Right cardiac atrium (tissue), 5 donors: ENCODE measurements at regions of chr3 and their contacts with region 1.

Region 1: GRCh38 chr3:133927540-133928066 is 31.9 kb upstream of the RAB6B start:
- DNase-seq: peak; percentile 77 to 91 (median 86)
- ATAC-seq: peak; percentile 69 to 84
- H3K4me3 ChIP-seq: peak overlapping the region; percentile 52
- H3K27ac ChIP-seq: no peak overlapping the region
- H3K4me1 ChIP-seq: no peaks in the 10 kb centered on the region
- H3K27me3 ChIP-seq: no peaks in the 10 kb centered on the region

Region 2: DNA sequence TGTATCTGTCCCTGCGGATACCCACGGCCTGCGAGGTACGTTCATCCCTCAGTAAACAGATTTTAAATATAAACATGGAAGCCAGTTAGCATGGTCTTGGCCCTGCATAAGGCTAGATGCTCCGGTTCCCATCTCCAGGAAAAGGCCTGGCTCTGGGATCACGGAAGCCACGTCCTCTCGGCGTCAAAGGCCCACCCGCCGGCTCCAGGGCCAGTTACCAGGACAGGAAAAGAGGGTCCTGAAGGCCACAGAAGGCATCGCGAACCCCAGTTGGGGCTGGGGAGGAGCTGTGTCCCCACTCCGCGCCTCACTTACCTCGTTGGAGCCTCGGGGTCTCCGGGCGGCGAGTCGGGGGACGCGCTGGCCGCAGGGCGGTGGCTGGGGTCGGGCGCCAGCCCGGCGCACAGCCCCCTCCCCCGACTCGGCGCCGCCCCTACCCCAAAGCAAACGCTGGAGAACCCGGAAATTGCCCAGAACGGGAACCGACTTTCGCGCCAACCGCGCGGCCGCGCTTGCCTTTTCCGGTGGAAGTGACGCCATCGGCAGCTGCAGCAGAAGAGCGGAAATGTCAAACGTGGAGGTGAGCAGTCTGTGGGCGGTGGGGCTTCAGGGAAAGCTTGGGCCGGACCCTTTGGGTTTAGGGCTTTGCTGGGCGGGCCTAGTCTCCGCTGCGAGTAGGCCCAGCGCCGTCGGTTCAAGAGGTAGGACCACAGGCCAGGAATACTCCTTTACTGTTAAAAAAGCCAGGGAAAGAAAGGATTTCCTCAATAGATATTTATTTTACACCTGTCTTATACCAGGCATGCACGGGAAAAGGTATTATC is 265.9 kb before region 1 on chr3 and contains the start of gene TOPBP1:
- intact Hi-C with region 1: loop called in 2 of 4 experiments (anchors 5 to 10 kb)
- DNase-seq: peak; percentile 83 to 93 (median 92)
- ATAC-seq: peak; percentile 91 to 92
- H3K4me3 ChIP-seq: peak within 1 kb of the TSS; percentile 66
- H3K27ac ChIP-seq: peak within 1 kb of the TSS; percentile 93
- H3K4me1 ChIP-seq: peaks cover 3% of the 10 kb centered on the region
- H3K27me3 ChIP-seq: no peaks in the 10 kb centered on the region
- total RNA-seq, gene TOPBP1: 10.5 to 12.7 (median 12.4) TPM

Region 3: DNA sequence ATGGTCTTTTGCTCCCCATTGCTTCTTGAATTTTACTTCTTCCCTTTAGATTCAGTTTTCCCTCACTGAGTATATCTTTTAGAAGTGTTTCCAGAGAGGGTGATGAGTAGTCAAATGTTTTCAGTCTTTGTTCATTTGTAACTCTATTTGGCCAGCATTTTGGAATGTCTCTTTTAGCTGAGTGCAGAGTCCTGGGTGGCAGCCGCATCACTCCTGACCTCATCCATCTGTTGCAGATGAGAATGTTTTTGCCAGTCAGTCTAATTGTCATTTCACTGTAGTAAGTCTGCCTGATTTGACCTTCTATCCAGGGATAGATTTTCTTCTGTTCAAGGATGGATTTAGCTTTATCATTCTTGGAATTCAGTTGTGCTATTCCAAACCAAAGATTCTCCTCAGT is 114.7 kb before region 1 on chr3:
- intact Hi-C with region 1: loop called in 2 of 4 experiments (anchors 2 to 5 kb)
- DNase-seq: no peak
- ATAC-seq: peak in 1 of 2 donors; percentile 11
- H3K4me3 ChIP-seq: no peak overlapping the region
- H3K27ac ChIP-seq: no peak overlapping the region
- H3K4me1 ChIP-seq: no peaks in the 10 kb centered on the region
- H3K27me3 ChIP-seq: no peaks in the 10 kb centered on the region

Region 4: GRCh38 chr3:133821767-133822638 is 105.6 kb before region 1 on chr3:
- intact Hi-C with region 1: loop called (anchors 1 to 5 kb)
- DNase-seq: peak; percentile 72 to 89 (median 86)
- ATAC-seq: peak; percentile 49 to 87
- H3K4me3 ChIP-seq: no peak overlapping the region
- H3K27ac ChIP-seq: no peak overlapping the region
- H3K4me1 ChIP-seq: no peaks in the 10 kb centered on the region
- H3K27me3 ChIP-seq: no peaks in the 10 kb centered on the region

Region 5: DNA sequence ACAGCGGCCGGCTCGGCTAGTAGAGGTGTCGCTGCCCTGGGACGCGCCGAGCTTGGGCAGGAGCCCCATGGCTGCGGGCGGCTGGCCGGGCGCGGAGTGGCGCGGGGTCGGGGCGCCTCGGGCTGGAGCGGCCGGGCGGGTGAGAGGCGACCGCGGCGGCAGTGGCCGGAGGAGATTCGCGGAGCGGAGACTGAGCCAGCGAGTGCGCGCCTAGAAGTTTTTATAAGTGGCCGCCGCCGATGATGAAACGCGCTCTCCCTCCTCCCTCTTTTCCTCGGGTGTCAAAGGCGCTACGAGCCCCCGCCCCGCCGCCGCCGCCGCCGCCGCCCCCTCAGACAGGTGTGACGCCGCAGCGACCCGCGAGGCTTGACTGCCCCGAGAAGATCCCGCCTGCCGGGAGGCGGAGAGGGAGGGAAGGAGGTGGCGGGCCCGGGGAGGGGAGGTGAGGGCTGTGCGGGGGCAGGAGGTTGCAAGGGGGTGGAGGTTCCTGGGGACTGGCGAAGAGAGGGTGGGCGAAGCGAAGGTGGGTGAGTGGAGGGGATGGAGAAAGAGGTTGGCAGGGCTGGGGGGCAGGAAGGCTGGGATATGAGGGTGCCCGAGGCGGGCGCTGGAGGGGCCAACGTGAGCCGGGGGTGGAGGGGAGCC is 102.3 kb after region 1 on chr3 and contains the start of gene SLCO2A1:
- intact Hi-C with region 1: loop called in 1 of 4 experiments (anchors 10 kb)
- DNase-seq: peak; percentile 64 to 80 (median 79)
- ATAC-seq: peak; percentile 79 to 81
- H3K4me3 ChIP-seq: peak within 1 kb of the TSS; percentile 73
- H3K27ac ChIP-seq: no peak within 1 kb of the TSS
- H3K4me1 ChIP-seq: no peaks in the 10 kb centered on the region
- H3K27me3 ChIP-seq: no peaks in the 10 kb centered on the region
- total RNA-seq, gene SLCO2A1: 34.5 to 100 (median 43.7) TPM

Region 6: GRCh38 chr3:134197681-134198261 is 270.2 kb after region 1 on chr3:
- intact Hi-C with region 1: loop called in 1 of 4 experiments (anchors 10 kb)
- DNase-seq: no peak
- ATAC-seq: peak; percentile 78
- H3K4me3 ChIP-seq: no peak overlapping the region
- H3K27ac ChIP-seq: no peak overlapping the region
- H3K4me1 ChIP-seq: no peaks in the 10 kb centered on the region
- H3K27me3 ChIP-seq: no peaks in the 10 kb centered on the region

Region 7: DNA sequence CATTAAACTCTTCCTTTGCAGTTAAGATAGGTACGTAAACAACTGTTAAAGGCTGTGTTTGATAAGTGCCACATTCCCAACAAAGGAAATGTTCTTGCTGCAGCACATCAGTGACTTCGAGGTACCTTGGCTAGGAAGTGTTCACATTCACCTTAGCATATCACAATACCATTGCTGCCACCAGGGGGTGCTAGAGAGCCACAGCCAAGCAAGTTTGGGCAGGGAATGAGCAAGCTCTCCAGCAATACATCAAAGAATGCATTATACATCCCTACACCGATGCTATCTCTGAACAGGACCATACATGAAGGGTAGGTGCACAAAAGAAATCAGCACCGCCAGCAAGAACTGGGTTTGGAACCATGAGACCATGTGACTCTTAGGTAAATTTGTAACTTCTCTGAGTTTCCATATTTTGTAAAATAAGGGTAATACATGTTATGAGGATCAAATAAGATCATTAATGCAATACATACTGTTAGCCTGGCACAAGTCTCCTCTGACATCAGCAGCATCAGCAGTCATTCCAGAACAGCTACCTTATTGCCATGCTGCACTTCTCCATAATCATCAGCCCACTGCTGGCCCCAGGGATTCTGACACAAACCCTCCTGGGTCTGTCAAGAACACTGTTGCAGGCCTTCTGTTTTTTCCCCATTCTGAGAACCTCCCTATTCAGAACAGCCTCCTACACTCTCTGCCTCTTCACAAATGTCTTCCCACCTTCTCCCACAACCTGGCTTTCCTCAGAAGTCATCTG is 285.5 kb after region 1 on chr3:
- intact Hi-C with region 1: loop called in 1 of 4 experiments (anchors 10 kb)
- DNase-seq: peak; percentile 75 to 90 (median 87)
- ATAC-seq: peak; percentile 77 to 84
- H3K4me3 ChIP-seq: no peak overlapping the region
- H3K27ac ChIP-seq: no peak overlapping the region
- H3K4me1 ChIP-seq: peaks cover 4% of the 10 kb centered on the region
- H3K27me3 ChIP-seq: no peaks in the 10 kb centered on the region